ENCODE measurements at regions of chr10 and their contacts with region 1.

Region 1: GRCh38 chr10:76139431-76139830 is 708.0 kb downstream of the LRMDA start:
- DNase-seq: no peak
- H3K27ac ChIP-seq: no peak overlapping the region
- CTCF ChIP-seq: no peak

Region 2: DNA sequence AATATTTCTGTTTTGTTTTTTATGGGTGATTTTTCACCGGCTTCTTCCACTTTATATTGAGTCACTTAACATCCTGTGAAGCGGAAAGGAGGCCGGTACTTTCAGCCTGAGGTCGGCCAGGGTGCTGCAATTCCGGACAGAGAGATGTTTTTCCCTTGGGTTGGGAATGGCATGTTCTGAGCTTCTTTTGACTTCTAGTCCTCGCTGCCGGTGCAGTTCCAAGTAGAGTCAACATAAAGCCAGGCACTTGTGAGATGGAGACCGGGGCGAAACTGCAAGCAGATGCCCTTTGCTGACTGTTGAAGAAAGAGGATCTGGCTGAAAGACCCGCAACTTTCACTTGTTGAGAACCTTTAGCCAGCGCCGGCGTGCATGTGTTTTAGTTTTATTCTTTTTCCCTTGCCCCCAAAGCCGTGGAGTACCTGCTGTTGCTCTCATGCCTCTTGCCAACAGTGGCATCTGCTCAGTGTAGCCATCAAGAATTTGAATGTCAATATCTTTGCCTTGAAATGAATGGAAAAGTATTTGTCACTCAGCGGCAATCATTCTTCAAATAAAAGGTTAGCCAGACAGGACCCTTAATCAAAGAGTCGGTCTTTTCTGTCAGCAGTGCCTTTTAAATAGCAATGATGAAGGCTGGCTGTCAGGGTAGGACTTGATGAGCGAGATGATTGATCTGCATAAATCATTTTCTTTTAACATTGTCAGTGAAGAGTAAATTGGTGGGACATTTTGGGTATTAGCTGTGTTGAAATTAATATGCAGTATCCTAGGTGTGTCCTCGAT is 356.8 kb before region 1 on chr10:
- CTCF ChIA-PET with region 1: no interaction called
- POLR2A ChIA-PET with region 1: no interaction called
- DNase-seq: no peak
- H3K27ac ChIP-seq: no peak overlapping the region
- CTCF ChIP-seq: no peak

Region 3: GRCh38 chr10:76169246-76169645 is 29.8 kb after region 1 on chr10:
- CTCF ChIA-PET with region 1: no interaction called
- POLR2A ChIA-PET with region 1: no interaction called
- DNase-seq: no peak
- H3K27ac ChIP-seq: no peak overlapping the region
- CTCF ChIP-seq: no peak

Region 4: GRCh38 chr10:76299501-76299900 is 160.1 kb after region 1 on chr10:
- CTCF ChIA-PET with region 1: no interaction called
- POLR2A ChIA-PET with region 1: interaction called, 10 read pairs
- DNase-seq: no peak
- H3K27ac ChIP-seq: no peak overlapping the region
- CTCF ChIP-seq: no peak

Measured in RWPE1 (cell line).